ENCODE measurements at regions of chr9 and their contacts with region 1.

Region 1: DNA sequence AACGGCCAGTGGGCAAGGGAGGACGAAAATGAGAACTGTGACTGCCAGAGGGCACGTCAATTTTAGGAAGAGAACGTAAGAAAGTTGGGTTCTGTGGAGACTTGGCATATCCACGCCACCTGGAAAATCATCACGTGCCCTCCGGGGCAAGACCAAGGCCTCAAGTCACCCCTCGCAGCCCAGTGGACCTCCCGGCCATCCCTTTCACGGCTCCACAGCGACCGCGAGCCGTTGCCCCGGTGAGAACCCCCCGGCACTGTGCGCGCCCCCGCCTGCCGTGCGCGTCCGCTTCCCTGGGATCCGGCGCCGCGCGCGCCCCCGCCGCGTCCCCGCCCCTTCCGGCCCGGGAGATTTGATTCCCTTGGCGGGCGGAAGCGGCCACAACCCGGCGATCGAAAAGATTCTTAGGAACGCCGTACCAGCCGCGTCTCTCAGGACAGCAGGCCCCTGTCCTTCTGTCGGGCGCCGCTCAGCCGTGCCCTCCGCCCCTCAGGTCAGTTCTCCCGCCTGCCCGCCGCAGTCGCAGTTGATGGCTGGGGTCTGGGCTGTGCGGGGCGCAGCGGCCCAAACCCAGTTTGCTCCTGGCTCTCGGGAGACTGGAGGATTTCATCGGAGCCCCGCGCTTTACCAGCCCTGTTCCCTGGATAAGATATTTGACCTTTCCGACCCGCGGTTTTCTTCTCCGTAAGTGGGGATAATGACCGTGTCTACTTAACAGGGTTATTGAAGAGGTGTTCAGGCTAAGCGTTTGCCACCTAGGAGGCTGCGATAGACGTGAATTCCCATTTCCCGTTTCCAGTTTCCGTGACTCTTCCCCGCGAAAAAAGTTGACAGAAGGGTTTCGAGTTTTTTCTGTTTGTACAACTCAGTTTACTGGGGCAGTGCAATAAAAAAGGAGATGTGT is at the start of gene MELK:
- DNase-seq: peak; percentile 90
- H3K4me3 ChIP-seq: peak within 1 kb of the TSS; percentile 94
- H3K27ac ChIP-seq: peak within 1 kb of the TSS; percentile 58
- H3K4me1 ChIP-seq: peaks cover 53% of the 10 kb centered on the region
- CTCF ChIP-seq: no peak
- total RNA-seq, gene MELK: 47.9 and 48.9 TPM in 2 replicates

Region 2: DNA sequence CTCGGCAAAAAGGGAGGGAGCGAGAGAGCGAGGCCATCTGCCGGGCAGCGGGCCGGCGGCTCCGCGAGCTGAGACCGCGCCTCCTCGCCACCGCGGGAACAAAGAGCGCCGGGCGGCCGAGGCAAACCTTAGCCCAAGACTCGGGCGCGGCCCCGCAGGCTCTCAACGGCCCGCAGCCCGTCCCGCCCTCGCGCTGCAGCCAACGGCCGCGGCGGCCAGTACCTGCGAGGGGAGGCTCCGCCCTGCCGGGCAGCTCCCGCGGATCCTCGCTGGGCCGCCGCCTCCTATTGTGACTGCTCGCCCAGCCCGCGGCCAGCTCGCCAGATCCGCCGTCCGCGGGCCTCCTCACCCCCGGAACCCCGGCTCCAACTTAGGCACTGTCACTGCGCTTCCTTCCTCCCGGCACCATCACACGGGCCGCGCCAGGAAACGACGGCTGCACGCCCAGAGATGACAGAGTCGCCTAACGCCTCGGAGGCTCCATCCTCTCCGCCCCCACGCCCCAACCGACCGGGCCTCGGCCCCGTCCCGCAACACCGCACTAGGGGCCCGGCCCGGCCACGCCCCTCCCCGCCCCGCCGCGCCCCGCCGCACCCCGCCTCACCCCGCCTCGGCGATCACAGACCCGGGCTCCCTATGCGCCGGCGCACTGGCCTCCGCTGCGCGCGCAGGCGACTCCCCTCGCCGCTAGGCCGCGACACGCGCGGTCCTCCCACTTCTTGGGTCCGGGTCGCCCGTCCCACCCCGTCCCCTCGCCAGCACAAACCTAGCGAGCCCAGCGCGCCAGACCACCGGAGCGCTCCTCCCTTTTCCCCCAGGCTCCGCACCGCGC is 172.2 kb before region 1 on chr9:
- CTCF ChIA-PET with region 1: no interaction called
- POLR2A ChIA-PET with region 1: interaction called, 3 read pairs
- intact Hi-C with region 1: loop called (anchors 5 kb)
- DNase-seq: peak; percentile 91
- H3K4me3 ChIP-seq: peak overlapping the region; percentile 86
- H3K27ac ChIP-seq: peak overlapping the region; percentile 93
- H3K4me1 ChIP-seq: peaks cover 17% of the 10 kb centered on the region
- CTCF ChIP-seq: no peak

Region 3: GRCh38 chr9:36788534-36788933 is 215.8 kb after region 1 on chr9:
- CTCF ChIA-PET with region 1: no interaction called
- POLR2A ChIA-PET with region 1: no interaction called
- intact Hi-C with region 1: no loop called
- DNase-seq: peak; percentile 39
- H3K4me3 ChIP-seq: no peak overlapping the region
- H3K27ac ChIP-seq: no peak overlapping the region
- H3K4me1 ChIP-seq: no peaks in the 10 kb centered on the region
- CTCF ChIP-seq: peak; percentile 68

Measured in OCI-LY7 (cell line).